Activated CD8-positive, alpha-beta T cell treated with anti-CD3 and anti-CD28 coated beads for 36 hours (primary cell): ENCODE measurements at regions of chr16 and their contacts with region 1.

Region 1: DNA sequence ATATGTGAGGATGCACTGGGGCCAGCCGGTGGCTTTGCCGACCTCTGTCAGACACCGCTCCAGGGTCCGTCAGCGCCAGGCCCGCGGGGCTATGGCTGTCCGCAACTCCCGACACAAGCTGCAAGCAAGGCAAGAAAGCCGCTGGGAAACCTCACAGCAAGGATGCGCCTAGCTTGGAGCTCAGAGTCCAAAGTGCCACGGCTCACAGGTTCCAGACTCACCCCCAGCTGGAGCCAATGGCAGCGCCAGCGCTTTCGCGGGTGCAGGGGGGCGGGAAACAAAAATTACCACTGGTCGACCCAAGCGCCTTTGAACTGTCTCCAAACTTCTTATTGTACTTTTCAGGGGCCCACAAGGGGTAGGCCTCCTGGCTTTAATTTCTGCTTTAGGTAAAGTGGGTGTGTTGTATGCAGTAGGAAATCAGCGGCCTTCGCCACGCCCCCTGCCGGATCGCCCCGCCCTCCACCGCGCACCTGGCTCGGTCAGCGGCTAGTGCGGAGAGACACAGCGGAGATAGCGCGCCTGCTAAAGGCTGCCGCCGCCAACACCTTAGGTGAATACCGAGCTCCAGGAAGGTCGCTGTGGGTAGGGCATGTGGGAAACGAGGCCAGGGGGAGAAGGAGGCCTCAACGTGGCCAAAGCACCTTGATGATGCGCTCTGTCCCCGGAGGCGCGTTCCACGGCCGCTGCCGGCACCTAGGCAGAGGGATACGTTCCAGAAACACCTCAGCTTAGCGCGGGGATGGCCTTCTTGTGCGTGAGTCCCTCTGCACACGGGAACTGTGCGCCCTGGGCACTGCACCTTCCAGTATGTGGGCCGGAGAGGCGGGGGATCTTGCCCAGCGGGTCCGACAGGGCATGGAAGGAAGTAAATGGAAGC is 61.0 kb upstream of the RBL2 start:
- DNase-seq: peak; percentile 80
- ATAC-seq: peak; percentile 94
- H3K4me3 Mint-ChIP-seq: peak overlapping the region; percentile 76
- H3K27ac Mint-ChIP-seq: peak overlapping the region; percentile 6
- H3K4me1 Mint-ChIP-seq: peaks cover 21% of the 10 kb centered on the region
- H3K27me3 Mint-ChIP-seq: no peaks in the 10 kb centered on the region
- CTCF ChIP-seq: no peak

Region 2: GRCh38 chr16:53509906-53510703 is 136.9 kb after region 1 on chr16:
- CTCF ChIA-PET with region 1: interaction called, 3 read pairs
- POLR2A ChIA-PET with region 1: no interaction called
- intact Hi-C with region 1: loop called (anchors 10 kb)
- DNase-seq: peak; percentile 56
- ATAC-seq: peak; percentile 73
- H3K4me3 Mint-ChIP-seq: no peak overlapping the region
- H3K27ac Mint-ChIP-seq: no peak overlapping the region
- H3K4me1 Mint-ChIP-seq: peaks cover 22% of the 10 kb centered on the region
- H3K27me3 Mint-ChIP-seq: no peaks in the 10 kb centered on the region
- CTCF ChIP-seq: peak; percentile 95